Lower lobe of right lung (tissue), 2 donors: ENCODE measurements at regions of chr1 and their contacts with region 1.

Region 1: GRCh38 chr1:17125756-17126237 is 6.5 kb upstream of the PADI2 start:
- DNase-seq: peak; percentile 93
- ATAC-seq: peak; percentile 86 to 89
- H3K4me3 ChIP-seq: no peak overlapping the region
- H3K27ac ChIP-seq: no peak overlapping the region
- H3K4me1 ChIP-seq: peaks cover 37% of the 10 kb centered on the region
- H3K27me3 ChIP-seq: no peaks in the 10 kb centered on the region
- CTCF ChIP-seq: peak; percentile 95

Region 2: GRCh38 chr1:17236779-17237560 is 111.2 kb after region 1 on chr1:
- intact Hi-C with region 1: loop called (anchors 10 kb)
- DNase-seq: peak; percentile 89
- ATAC-seq: peak; percentile 81 to 86
- H3K4me3 ChIP-seq: no peak overlapping the region
- H3K27ac ChIP-seq: no peak overlapping the region
- H3K4me1 ChIP-seq: peaks cover 6% of the 10 kb centered on the region
- H3K27me3 ChIP-seq: peaks cover 7% of the 10 kb centered on the region
- CTCF ChIP-seq: peak; percentile 90